ENCODE measurements at regions of chr1 and their contacts with region 1.

Region 1: GRCh38 chr1:200971955-200972711 is 51.4 kb downstream of the KIF21B start:
- DNase-seq: peak; percentile 48 to 73 (median 59)
- ATAC-seq: peak; percentile 71
- H3K4me3 ChIP-seq: no peak overlapping the region
- H3K4me3 Mint-ChIP-seq: no peak overlapping the region
- H3K27ac ChIP-seq: no peak overlapping the region
- H3K27ac Mint-ChIP-seq: peak overlapping the region in 2 of 9 donors; percentile 38 to 84
- H3K4me1 ChIP-seq: no peaks in the 10 kb centered on the region
- H3K4me1 Mint-ChIP-seq: peaks cover 0 to 6% (median 0%) of the 10 kb centered on the region in 7 donors
- H3K27me3 ChIP-seq: no peaks in the 10 kb centered on the region
- H3K27me3 Mint-ChIP-seq: no peaks in the 10 kb centered on the region

Region 2: GRCh38 chr1:200558866-200559459 is 413.2 kb before region 1 on chr1:
- CTCF ChIA-PET with region 1: no interaction called
- POLR2A ChIA-PET with region 1: no interaction called
- intact Hi-C with region 1: loop called in 1 of 2 experiments (anchors 5 kb)
- DNase-seq: peak in 4 of 9 donors; percentile 10 to 26 (median 18)
- ATAC-seq: peak; percentile 48
- H3K4me3 ChIP-seq: no peak overlapping the region
- H3K4me3 Mint-ChIP-seq: no peak overlapping the region
- H3K27ac ChIP-seq: no peak overlapping the region
- H3K27ac Mint-ChIP-seq: no peak overlapping the region
- H3K4me1 ChIP-seq: no peaks in the 10 kb centered on the region
- H3K4me1 Mint-ChIP-seq: peaks cover 0 to 17% (median 6%) of the 10 kb centered on the region in 7 donors
- H3K27me3 ChIP-seq: no peaks in the 10 kb centered on the region
- H3K27me3 Mint-ChIP-seq: no peaks in the 10 kb centered on the region

Region 3: DNA sequence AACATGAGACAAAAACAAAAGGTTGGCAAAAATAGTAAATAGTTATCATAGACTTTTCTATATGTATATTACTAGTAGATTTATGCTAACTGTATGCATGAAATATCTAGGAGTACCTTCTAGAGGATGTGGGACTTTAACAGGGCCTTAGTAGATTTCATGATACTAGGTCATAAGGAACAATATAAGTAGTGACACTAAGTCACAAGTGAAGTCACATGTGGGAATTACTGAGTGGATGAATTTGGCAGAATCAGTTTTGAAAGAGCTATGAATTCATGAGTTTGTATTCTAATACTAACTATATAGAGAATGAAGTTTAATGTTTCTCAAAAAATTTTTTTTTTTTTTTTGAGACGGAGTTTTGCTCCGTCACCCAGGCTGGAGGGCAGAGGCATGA is 152.4 kb before region 1 on chr1:
- CTCF ChIA-PET with region 1: no interaction called
- POLR2A ChIA-PET with region 1: no interaction called
- intact Hi-C with region 1: no loop called
- DNase-seq: no peak
- ATAC-seq: no peak
- H3K4me3 ChIP-seq: no peak overlapping the region
- H3K4me3 Mint-ChIP-seq: no peak overlapping the region
- H3K27ac ChIP-seq: no peak overlapping the region
- H3K27ac Mint-ChIP-seq: peak overlapping the region in 1 of 9 donors; percentile 25
- H3K4me1 ChIP-seq: no peaks in the 10 kb centered on the region
- H3K4me1 Mint-ChIP-seq: no peaks in the 10 kb centered on the region
- H3K27me3 ChIP-seq: no peaks in the 10 kb centered on the region
- H3K27me3 Mint-ChIP-seq: peaks cover 0 to 3% (median 0%) of the 10 kb centered on the region in 5 donors

Region 4: DNA sequence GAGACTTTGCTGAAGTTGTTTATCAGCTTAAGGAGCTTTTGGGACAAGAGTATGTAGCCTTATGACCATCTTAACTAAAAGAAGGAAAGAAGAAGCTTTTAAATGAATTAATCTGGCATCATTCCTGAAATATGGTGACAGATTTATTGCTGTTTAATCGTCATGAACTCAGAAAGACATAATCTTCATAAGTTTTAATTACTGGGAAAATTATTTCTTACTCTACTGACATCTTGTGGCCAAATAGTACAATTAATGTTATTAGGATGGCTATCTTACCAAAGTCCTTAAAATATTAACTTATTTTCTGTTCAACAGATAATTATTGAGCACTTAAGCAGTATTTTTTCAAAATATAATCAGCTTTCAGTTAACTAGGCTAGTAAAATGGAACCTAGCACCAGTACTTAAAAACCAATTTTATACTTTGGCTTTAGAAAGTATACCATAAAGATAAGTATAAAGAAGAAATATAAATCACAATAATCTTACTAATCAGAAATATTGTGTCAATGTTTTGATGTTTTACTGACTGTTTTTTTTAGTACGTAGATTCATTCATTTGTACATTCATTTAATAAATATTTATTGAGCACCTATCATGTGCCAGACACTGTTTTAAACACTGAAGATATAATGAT is 134.1 kb before region 1 on chr1:
- CTCF ChIA-PET with region 1: no interaction called
- POLR2A ChIA-PET with region 1: no interaction called
- intact Hi-C with region 1: no loop called
- DNase-seq: no peak
- ATAC-seq: no peak
- H3K4me3 ChIP-seq: no peak overlapping the region
- H3K4me3 Mint-ChIP-seq: no peak overlapping the region
- H3K27ac ChIP-seq: no peak overlapping the region
- H3K27ac Mint-ChIP-seq: no peak overlapping the region
- H3K4me1 ChIP-seq: no peaks in the 10 kb centered on the region
- H3K4me1 Mint-ChIP-seq: peaks cover 0 to 1% (median 0%) of the 10 kb centered on the region in 7 donors
- H3K27me3 ChIP-seq: no peaks in the 10 kb centered on the region
- H3K27me3 Mint-ChIP-seq: no peaks in the 10 kb centered on the region

Region 5: DNA sequence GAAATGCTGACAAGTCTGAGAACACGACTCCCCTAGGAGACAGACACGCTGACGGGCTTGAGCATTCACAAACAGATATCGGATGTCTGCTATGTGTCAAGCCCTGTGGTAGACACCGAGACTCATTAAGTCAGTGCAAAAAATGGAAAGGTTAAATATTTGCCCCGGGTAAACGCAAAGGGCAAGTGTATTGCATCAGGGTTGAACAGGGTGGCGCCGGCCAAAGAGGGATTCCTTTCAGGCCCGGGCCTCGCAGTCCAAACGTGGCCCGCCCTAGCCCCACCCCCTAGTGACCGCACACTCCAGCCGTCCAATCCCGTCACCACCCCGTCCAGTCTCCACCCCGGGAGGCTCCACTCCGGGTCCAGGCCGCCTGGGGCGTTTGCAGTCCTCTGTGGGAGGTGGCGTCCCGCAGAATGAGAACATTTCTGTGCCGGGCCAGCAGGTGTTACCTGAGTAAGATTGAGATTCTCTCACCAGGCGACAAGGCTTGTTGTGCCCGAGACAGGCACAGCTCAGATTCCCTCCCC is 198.5 kb after region 1 on chr1:
- CTCF ChIA-PET with region 1: interaction called, 3 read pairs
- POLR2A ChIA-PET with region 1: no interaction called
- intact Hi-C with region 1: loop called in 1 of 2 experiments (anchors 1 kb)
- DNase-seq: peak; percentile 38 to 73 (median 50)
- ATAC-seq: peak; percentile 97
- H3K4me3 ChIP-seq: peak overlapping the region; percentile 78
- H3K4me3 Mint-ChIP-seq: peak overlapping the region; percentile 65 to 91 (median 86)
- H3K27ac ChIP-seq: peak overlapping the region; percentile 53
- H3K27ac Mint-ChIP-seq: peak overlapping the region in 7 of 9 donors; percentile 36 to 78 (median 62)
- H3K4me1 ChIP-seq: peaks cover 0 to 7% of the 10 kb centered on the region in 2 donors
- H3K4me1 Mint-ChIP-seq: peaks cover 6 to 14% (median 9%) of the 10 kb centered on the region in 7 donors
- H3K27me3 ChIP-seq: no peaks in the 10 kb centered on the region
- H3K27me3 Mint-ChIP-seq: peaks cover 0 to 42% (median 8%) of the 10 kb centered on the region in 5 donors

Region 6: GRCh38 chr1:201198598-201198997 is 226.5 kb after region 1 on chr1:
- CTCF ChIA-PET with region 1: no interaction called
- POLR2A ChIA-PET with region 1: no interaction called
- intact Hi-C with region 1: no loop called
- DNase-seq: no peak
- ATAC-seq: no peak
- H3K4me3 ChIP-seq: no peak overlapping the region
- H3K4me3 Mint-ChIP-seq: no peak overlapping the region
- H3K27ac ChIP-seq: no peak overlapping the region
- H3K27ac Mint-ChIP-seq: no peak overlapping the region
- H3K4me1 ChIP-seq: no peaks in the 10 kb centered on the region
- H3K4me1 Mint-ChIP-seq: no peaks in the 10 kb centered on the region
- H3K27me3 ChIP-seq: no peaks in the 10 kb centered on the region
- H3K27me3 Mint-ChIP-seq: no peaks in the 10 kb centered on the region

Measured in naive thymus-derived CD4-positive, alpha-beta T cell (primary cell).